Right ventricle myocardium inferior (tissue), 1 donor: ENCODE measurements at regions of chr10 and their contacts with region 1.

Region 1: GRCh38 chr10:14837757-14838581 is at the starts of genes CDNF, HSPA14 and MSANTD7:
- DNase-seq: peak; percentile 99
- ATAC-seq: peak; percentile 99
- total RNA-seq, gene CDNF: 1.9 TPM
- total RNA-seq, gene HSPA14: 7.6 TPM
- total RNA-seq, gene MSANTD7: 5.6 TPM

Region 2: GRCh38 chr10:14604181-14605142 is 233.5 kb before region 1 on chr10:
- intact Hi-C with region 1: loop called (anchors 5 kb)
- DNase-seq: peak; percentile 93
- ATAC-seq: peak; percentile 98

Region 3: DNA sequence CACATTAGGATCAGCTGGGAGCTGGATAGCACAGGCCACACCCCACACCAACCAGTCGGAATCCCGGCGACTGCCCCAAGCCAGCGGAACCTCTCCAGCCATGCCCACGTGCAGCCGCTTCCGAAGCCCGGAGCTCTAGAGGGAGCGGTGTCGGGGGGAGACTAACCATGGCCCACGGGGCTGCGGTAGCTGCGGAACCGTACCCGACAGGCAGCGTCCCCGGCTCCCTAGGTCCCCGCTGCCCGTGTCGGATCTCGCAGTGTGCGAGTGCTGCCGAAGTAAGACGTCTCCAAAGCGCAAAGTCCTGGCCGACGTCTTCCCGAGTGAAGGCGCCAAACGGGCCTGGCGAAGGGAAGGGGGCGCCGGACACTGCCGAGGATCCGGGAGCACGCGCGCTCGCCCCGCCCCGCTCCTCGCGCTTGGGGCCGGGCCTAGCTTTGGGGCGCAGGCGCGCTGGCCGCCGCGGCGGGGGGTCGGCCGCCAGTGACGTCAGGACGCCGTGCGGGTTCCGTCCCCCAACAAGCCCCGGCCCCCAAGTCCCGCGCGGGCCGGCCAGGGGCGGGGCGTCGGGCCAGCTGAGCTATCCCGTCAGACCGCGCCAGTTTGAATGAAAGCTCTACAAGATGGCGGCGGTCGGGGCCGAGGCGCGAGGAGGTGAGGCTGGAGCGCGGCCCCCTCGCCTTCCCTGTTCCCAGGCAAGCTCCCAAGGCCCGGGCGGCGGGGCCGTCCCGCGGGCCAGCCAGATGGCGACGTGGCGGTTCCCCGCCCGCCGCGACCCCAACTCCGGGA is 40.5 kb after region 1 on chr10 and contains the start of gene SUV39H2:
- intact Hi-C with region 1: loop called (anchors 5 kb)
- DNase-seq: peak; percentile 98
- ATAC-seq: peak; percentile 99
- total RNA-seq, gene SUV39H2: 4.9 TPM

Region 4: DNA sequence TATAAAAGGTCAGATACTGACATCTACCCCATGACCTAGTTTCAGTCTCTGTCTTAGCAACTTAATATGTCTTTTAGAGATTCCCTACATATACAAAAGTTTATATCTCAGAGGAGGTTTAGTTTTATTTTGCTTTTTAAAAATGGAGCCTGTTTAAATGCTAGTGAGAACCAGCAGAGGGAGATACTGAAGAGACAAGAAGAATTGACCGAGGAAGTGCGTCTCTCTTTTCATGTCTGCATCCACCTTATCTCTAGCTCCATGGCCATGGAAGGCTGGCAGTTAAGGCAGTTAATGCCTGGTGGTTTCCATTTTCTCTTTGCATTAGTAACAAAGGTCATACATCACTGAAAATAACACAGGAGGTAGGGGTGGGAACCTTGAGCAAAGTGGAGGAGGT is 51.3 kb after region 1 on chr10:
- intact Hi-C with region 1: no loop called
- DNase-seq: no peak
- ATAC-seq: no peak

Region 5: GRCh38 chr10:14959276-14960057 is 121.5 kb after region 1 on chr10 and contains the start of gene MEIG1:
- intact Hi-C with region 1: loop called (anchors 2 kb)
- DNase-seq: peak; percentile 95
- ATAC-seq: peak; percentile 99
- total RNA-seq, gene MEIG1: not detected

Region 6: DNA sequence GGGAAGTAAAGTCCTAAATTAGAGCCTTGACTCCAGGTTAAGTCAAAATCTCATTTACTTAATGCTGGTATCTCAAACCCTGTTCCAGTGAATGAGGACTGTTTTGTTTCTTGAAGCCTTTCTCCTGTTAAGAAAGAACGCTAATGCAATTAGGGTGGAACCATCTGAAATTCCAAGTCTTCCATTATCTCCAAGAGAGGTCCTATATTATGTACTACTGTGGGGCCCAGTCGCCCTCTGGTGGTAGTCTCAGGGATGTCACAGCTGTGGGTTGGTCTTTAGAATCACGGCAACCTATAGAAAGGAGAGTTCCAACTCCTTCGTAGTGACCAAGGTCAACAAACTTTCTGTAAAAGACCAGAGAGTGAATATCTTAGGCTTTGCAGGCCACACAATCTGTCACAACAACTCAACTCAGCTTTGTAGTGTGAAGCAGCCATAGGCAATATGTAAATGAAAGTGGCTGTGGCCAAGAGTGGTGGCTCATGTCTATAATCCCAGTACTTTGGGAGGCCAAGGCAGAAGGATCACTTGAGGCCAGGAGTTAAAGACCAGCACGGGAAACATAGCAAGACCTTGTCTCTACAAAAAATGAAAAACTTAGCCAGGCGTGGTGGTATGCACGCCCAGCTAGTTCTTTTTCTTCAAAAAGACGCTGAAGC is 268.5 kb after region 1 on chr10:
- intact Hi-C with region 1: loop called (anchors 10 kb)
- DNase-seq: peak; percentile 84
- ATAC-seq: peak; percentile 77